Activated CD4-positive, alpha-beta memory T cell treated with anti-CD3 and anti-CD28 coated beads for 36 hours (primary cell): ENCODE measurements at regions of chr2 and their contacts with region 1.

Region 1: GRCh38 chr2:96485751-96486651 is 19.2 kb downstream of the NEURL3 start:
- DNase-seq: peak; percentile 93
- H3K4me3 Mint-ChIP-seq: peak overlapping the region; percentile 95
- H3K27ac Mint-ChIP-seq: peak overlapping the region; percentile 99
- H3K4me1 Mint-ChIP-seq: peaks cover 47% of the 10 kb centered on the region
- H3K27me3 Mint-ChIP-seq: no peaks in the 10 kb centered on the region

Region 2: DNA sequence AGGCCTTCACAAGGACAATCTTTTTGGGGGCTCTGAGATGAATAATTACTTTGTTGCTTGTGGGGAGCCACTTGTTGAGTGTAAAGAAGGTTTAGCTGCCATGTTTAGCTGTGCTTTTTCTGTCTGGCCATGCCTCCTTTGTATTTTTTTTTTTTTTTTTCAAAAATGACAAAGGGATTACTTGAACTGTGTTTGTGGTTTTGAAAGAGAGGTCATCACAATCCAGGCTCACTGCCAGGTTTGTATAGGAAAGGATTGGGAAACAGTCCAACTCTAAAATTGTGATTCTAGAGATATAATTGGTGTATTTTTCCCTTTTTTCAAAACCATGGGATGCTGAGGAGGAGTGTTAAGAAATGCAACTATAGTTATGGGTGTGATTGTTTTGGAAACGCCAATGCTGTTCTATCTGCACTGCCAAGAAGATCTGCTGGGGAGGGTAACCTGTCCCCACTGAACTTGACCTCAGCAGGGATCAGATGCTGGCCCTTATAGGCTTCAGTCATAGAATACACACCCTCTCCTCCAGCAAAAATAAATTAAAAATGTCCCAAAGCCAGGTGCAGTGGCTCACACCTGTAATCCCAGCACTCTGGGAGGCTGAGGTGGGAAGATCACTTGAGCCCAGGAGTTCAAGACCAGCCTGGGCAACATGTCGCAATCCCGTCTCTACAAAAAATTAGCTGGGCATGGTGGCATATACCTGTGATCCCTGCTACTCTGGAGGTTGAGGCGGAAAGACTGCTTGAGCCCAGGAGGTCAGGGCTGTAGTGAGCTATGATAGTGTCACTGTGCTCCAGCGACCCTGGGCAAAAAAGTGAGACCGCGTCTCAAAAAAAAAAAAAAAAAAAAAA is 156.4 kb before region 1 on chr2:
- CTCF ChIA-PET with region 1: no interaction called
- POLR2A ChIA-PET with region 1: no interaction called
- intact Hi-C with region 1: no loop called
- DNase-seq: no peak
- H3K4me3 Mint-ChIP-seq: no peak overlapping the region
- H3K27ac Mint-ChIP-seq: no peak overlapping the region
- H3K4me1 Mint-ChIP-seq: peaks cover 48% of the 10 kb centered on the region
- H3K27me3 Mint-ChIP-seq: no peaks in the 10 kb centered on the region

Region 3: GRCh38 chr2:96501471-96501874 is 15.5 kb after region 1 on chr2:
- CTCF ChIA-PET with region 1: no interaction called
- POLR2A ChIA-PET with region 1: interaction called, 4 read pairs
- intact Hi-C with region 1: loop called (anchors 2 kb)
- DNase-seq: peak; percentile 53
- H3K4me3 Mint-ChIP-seq: no peak overlapping the region
- H3K27ac Mint-ChIP-seq: peak overlapping the region; percentile 18
- H3K4me1 Mint-ChIP-seq: peaks cover 18% of the 10 kb centered on the region
- H3K27me3 Mint-ChIP-seq: no peaks in the 10 kb centered on the region